ENCODE measurements at regions of chr1 and their contacts with region 1.

Region 1: GRCh38 chr1:109213785-109214468 is at the start of gene SARS1:
- DNase-seq: peak; percentile 95
- CTCF ChIP-seq: no peak

Region 2: DNA sequence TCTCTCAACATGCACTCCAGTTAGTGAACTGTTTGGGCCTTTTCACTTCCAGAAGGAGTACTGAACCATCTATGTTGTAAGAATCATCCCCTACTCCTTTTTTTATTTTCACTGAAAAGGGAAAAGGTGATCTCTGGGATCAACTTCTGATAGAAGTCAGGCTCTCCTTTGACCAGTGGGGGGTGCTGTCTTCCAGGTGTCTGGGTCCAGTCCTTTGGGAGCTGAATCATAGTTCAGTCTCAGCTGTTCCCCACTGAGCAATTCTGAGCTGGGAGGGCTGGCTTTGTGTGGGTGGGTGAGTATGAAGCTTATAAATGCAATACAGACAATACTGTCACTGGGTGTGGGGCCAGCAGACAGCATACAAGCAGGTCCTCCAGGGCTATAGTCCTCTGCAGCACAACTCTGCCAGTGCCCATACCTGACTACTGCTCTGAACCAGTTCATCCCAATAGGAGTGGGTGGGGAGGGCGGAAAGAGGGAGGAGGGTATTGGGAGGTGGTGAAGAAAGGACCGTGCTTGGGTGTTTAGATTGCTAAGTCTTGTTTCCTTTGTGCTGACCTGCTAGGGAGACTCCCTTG is 12.7 kb before region 1 on chr1:
- CTCF ChIA-PET with region 1: interaction called, 22 read pairs
- POLR2A ChIA-PET with region 1: no interaction called
- DNase-seq: peak; percentile 75
- CTCF ChIP-seq: peak; percentile 62

Region 3: GRCh38 chr1:109226078-109226445 is 12.1 kb after region 1 on chr1:
- CTCF ChIA-PET with region 1: interaction called, 15 read pairs
- POLR2A ChIA-PET with region 1: interaction called, 3 read pairs
- DNase-seq: no peak
- CTCF ChIP-seq: no peak